MCF 10A (cell line): ENCODE measurements at regions of chr11 and their contacts with region 1.

Region 1: GRCh38 chr11:79461144-79461543 is 20.3 kb upstream of the TENM4 start:
- DNase-seq: peak; percentile 63
- H3K4me3 Mint-ChIP-seq: peak overlapping the region; percentile 12
- H3K27ac Mint-ChIP-seq: peak overlapping the region; percentile 37
- H3K4me1 Mint-ChIP-seq: peaks cover 6% of the 10 kb centered on the region
- H3K27me3 Mint-ChIP-seq: no peaks in the 10 kb centered on the region
- CTCF ChIP-seq: peak; percentile 51

Region 2: DNA sequence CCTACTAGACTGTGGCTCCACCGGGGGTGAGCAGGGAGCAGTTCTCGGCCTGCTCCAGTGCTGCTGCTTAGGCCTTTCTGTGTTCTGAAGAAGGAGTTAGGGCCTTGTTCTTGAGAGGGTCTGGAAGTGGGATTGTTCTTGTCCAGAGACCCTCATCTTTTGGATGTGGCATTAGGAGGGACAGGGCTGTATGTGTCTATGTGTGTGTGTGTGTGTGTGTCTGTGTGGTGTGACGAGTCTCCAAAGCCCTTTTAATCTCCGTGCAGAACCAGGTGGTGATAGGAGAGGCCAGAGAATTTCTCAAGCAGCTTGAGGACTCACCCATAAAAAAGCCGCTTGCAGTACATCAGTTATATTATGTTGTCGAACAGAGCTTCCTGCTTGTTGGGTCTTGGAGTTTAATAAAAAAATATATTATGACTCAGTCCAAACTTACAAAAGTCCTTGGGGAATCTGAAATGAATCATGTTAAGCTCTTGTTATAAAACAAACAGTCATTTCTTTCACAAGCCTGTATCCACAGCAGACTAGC is 216.8 kb before region 1 on chr11:
- CTCF ChIA-PET with region 1: interaction called, 3 read pairs
- POLR2A ChIA-PET with region 1: no interaction called
- intact Hi-C with region 1: loop called (anchors 10 kb)
- DNase-seq: peak; percentile 84
- H3K4me3 Mint-ChIP-seq: peak overlapping the region; percentile 34
- H3K27ac Mint-ChIP-seq: peak overlapping the region; percentile 53
- H3K4me1 Mint-ChIP-seq: peaks cover 28% of the 10 kb centered on the region
- H3K27me3 Mint-ChIP-seq: no peaks in the 10 kb centered on the region
- CTCF ChIP-seq: no peak

Region 3: GRCh38 chr11:79525257-79525656 is 64.1 kb after region 1 on chr11:
- CTCF ChIA-PET with region 1: no interaction called
- POLR2A ChIA-PET with region 1: no interaction called
- intact Hi-C with region 1: loop called (anchors 10 kb)
- DNase-seq: no peak
- H3K4me3 Mint-ChIP-seq: no peak overlapping the region
- H3K27ac Mint-ChIP-seq: no peak overlapping the region
- H3K4me1 Mint-ChIP-seq: no peaks in the 10 kb centered on the region
- H3K27me3 Mint-ChIP-seq: peaks cover 31% of the 10 kb centered on the region
- CTCF ChIP-seq: no peak

Region 4: GRCh38 chr11:79648766-79649520 is 187.8 kb after region 1 on chr11:
- CTCF ChIA-PET with region 1: no interaction called
- POLR2A ChIA-PET with region 1: no interaction called
- intact Hi-C with region 1: no loop called
- DNase-seq: no peak
- H3K4me3 Mint-ChIP-seq: no peak overlapping the region
- H3K27ac Mint-ChIP-seq: no peak overlapping the region
- H3K4me1 Mint-ChIP-seq: no peaks in the 10 kb centered on the region
- H3K27me3 Mint-ChIP-seq: peaks cover 16% of the 10 kb centered on the region
- CTCF ChIP-seq: no peak